ENCODE measurements at regions of chr11 and their contacts with region 1.

Region 1: DNA sequence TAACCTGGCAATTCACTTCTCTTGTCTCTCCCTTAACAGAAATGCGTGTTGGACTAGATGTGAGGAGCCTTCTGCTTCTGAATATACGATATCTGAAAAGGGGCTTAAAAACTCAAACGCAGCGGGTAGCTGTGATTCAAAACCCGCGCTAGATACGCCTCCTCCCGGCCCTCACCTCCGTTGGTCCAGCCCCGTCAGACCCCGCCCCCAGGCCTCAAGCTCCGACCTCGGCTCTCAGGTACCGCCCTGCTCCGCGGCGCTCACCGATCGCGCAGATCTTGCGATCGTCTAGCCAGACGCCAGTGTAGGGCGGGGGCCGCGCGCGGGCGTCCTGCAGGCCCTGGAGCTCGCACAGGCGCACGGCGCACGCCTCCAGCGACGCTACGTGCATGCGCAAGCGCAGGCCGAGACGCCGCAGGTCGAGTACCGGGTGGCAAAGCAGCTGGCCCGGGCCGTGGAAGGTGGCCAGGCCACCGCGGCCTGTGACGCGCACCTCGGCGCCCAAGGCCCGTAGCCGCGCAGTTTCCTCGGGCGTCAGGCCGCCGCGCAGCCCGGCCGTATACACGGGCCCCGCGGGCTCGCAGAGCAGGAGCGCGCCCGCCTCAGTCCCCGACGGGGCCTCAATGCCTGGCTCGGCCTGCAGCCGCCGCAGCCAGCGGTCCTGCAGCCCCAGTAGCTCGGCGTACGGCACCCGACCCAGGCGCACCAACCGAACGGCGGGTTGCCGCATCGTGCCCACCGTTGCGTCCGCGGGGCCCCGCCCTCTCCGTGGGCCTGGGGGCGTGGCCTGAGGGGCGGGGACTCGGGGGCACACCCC is at the start of gene LIPT2:
- DNase-seq: peak; percentile 94 to 99
- ATAC-seq: peak; percentile 95 to 99 (median 95)
- H3K4me3 ChIP-seq: peak within 1 kb of the TSS; percentile 44
- H3K4me3 Mint-ChIP-seq: peak within 1 kb of the TSS; percentile 83
- H3K27ac ChIP-seq: peak within 1 kb of the TSS; percentile 60
- H3K27ac Mint-ChIP-seq: peak within 1 kb of the TSS; percentile 76 to 84
- H3K4me1 ChIP-seq: peaks cover 14% of the 10 kb centered on the region
- H3K4me1 Mint-ChIP-seq: peaks cover 17% of the 10 kb centered on the region in 2 donors
- H3K27me3 ChIP-seq: no peaks in the 10 kb centered on the region
- H3K27me3 Mint-ChIP-seq: no peaks in the 10 kb centered on the region
- CTCF ChIP-seq: no peak
- total RNA-seq, gene LIPT2: 0.99 to 4.1 (median 3.1) TPM

Region 2: DNA sequence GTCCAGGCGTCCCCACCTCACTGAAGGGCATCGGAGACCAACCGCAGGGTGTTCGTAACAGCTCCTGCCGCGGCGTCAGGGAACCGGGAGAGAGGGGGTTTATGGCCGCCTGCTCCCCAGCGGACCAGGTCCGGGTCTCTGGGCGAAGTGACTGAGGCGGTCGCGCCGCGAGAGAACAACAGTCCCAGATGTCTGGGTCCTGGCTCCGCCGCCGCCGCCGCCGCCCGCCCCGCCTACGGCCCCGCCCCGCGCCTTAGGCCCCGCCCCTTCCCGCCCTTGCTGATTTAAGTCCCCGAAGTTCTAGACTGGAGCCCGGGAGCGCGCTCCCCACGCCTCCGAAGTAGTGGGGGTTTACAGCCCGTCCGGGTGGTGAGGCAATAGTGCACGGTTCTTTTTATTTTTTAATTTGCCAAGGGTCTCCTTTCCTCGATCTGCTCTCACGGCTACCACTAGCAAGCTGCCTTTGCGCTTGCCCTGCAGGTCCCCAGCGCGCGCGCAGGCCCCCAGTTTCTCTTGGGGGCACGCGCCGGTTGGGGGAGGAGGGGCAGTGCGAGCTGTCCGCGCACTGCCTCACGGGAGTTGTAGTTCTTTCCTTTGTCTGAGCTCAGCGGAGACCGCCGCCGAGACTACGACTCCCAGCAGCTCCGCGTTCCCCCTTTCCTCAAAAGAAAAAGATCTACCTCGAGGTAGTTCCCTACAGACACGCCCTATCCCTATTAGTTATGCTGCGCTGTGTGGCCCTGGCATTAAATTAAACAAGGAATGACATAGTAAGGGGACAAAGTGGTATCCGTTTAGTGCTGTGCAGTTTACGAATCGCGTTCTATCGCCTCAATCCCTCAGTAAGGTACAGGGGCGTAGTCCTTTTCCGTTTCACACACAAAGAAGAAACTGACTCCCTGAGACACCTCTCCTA is 94.7 kb before region 1 on chr11 and contains the start of gene PGM2L1:
- intact Hi-C with region 1: loop called (anchors 1 kb)
- DNase-seq: peak; percentile 90 to 97
- ATAC-seq: peak; percentile 93 to 97 (median 93)
- H3K4me3 ChIP-seq: peak within 1 kb of the TSS; percentile 95
- H3K4me3 Mint-ChIP-seq: peak within 1 kb of the TSS; percentile 88
- H3K27ac ChIP-seq: peak within 1 kb of the TSS; percentile 77
- H3K27ac Mint-ChIP-seq: peak within 1 kb of the TSS; percentile 96 to 97
- H3K4me1 ChIP-seq: peaks cover 8% of the 10 kb centered on the region
- H3K4me1 Mint-ChIP-seq: peaks cover 14 to 18% of the 10 kb centered on the region in 2 donors
- H3K27me3 ChIP-seq: no peaks in the 10 kb centered on the region
- H3K27me3 Mint-ChIP-seq: no peaks in the 10 kb centered on the region
- CTCF ChIP-seq: no peak
- total RNA-seq, gene PGM2L1: 4.4 to 8.0 (median 6.6) TPM

Region 3: DNA sequence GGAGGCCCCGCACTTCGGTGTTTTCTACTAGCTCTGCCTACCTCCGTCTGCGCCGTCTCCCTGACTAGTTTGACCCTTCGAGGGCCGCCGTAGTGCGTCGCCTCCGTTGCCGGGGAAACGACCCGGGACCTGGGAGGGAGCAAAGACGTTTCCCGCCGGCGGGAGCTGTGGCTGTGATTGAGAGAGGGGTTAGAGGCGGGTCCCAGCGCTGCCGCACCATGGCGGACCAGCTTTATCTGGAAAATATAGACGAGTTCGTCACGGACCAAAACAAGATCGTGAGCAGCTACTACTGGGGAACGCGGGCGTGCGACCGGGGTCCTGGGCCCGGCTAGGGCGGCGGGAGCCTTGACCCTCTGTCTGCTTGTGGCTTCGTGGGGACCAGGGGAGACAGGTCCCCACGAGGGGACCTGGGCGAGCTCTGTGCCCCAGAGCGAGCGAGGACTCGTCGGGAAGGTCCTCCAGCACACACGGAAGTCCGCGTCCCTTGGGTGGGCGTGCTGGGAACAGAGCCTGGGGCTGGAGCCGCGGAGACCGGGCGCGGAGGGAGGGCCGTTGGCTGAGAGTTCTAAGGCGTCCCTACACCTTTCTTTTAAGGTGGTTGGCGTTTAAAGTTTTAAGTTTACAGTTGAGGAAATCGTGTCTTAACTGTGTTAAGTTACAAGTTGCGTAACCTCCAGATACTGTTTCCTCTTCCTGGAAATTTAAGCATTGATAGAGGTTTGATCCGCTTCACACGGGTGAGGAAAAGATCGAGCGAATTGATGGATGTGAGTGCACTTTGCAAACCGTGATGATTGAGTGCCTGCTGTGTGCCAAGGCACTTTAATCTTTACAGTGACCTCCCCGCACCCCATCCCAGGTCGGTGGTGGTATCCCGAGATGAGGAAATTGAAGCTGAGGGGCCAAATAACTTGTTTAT is 99.5 kb after region 1 on chr11 and contains the start of gene POLD3:
- intact Hi-C with region 1: loop called (anchors 1 kb)
- DNase-seq: peak; percentile 84 to 95
- ATAC-seq: peak; percentile 95 to 96 (median 96)
- H3K4me3 ChIP-seq: peak within 1 kb of the TSS; percentile 85
- H3K4me3 Mint-ChIP-seq: peak within 1 kb of the TSS; percentile 99
- H3K27ac ChIP-seq: peak within 1 kb of the TSS; percentile 68
- H3K27ac Mint-ChIP-seq: peak within 1 kb of the TSS; percentile 93 to 95
- H3K4me1 ChIP-seq: peaks cover 13% of the 10 kb centered on the region
- H3K4me1 Mint-ChIP-seq: peaks cover 28 to 29% of the 10 kb centered on the region in 2 donors
- H3K27me3 ChIP-seq: no peaks in the 10 kb centered on the region
- H3K27me3 Mint-ChIP-seq: peaks cover 0 to 7% of the 10 kb centered on the region in 2 donors
- CTCF ChIP-seq: no peak
- total RNA-seq, gene POLD3: 9.4 to 10.6 (median 9.6) TPM